Psoas muscle (tissue), 8 donors: ENCODE measurements at regions of chr11 and their contacts with region 1.

Region 1: GRCh38 chr11:110000031-110000502 is 93.1 kb upstream of the ZC3H12C start:
- DNase-seq: no peak
- ATAC-seq: peak; percentile 98 to 99 (median 98)
- H3K4me3 ChIP-seq: no peak overlapping the region
- H3K27ac ChIP-seq: peak overlapping the region; percentile 77
- H3K4me1 ChIP-seq: peaks cover 20% of the 10 kb centered on the region
- H3K27me3 ChIP-seq: no peaks in the 10 kb centered on the region
- CTCF ChIP-seq: no peak

Region 2: GRCh38 chr11:110069158-110069737 is 69.2 kb after region 1 on chr11:
- intact Hi-C with region 1: loop called in 1 of 2 experiments (anchors 5 kb)
- DNase-seq: peak; percentile 64 to 86
- ATAC-seq: peak; percentile 89 to 96 (median 93)
- H3K4me3 ChIP-seq: no peak overlapping the region
- H3K27ac ChIP-seq: peak overlapping the region; percentile 80
- H3K4me1 ChIP-seq: peaks cover 19% of the 10 kb centered on the region
- H3K27me3 ChIP-seq: no peaks in the 10 kb centered on the region
- CTCF ChIP-seq: no peak

Region 3: DNA sequence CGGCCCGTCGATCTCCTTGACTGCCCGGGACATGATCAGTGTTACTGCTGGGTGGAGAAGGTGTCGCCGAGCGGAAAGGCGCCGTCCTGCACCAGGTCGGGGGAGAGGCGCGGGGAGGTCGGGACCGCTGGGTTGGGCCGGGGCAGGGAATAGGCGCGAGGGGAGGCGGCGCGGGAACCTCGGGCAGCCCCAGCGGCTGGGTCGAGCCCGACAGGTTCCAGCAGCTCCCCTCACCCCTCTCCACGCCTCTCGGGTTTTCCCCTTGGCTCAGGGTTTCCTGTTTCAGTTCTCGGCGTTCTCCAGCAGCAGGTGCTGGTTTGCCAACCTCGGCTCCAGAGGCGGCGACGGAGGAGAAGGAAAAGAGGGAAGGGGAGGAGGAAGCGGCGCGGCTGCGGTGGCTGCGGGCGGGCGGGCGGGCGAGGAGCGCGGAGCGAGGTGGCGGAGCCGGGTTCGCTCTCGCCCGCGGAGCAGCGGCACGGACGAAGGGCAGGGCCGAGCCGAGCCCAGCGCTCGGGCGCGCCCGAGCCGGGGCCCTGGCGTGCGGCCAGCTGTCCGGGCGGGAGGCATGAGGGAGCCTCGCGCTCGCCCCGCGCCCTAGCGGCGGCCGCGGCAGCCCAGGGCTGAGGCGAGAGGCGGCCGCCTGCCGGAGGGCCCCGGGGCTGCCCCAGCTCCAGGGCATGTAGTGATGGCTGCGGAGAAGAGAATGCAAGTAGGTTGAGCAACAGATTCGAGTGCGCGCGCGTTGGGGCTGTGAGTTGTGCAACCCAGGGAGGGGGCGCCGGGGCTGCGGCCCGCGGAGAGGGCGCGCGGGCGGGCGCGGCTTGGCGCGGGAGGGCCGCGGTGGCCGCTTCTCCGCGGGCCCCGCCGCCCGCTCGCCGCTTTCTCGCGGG is 92.7 kb after region 1 on chr11 and contains the start of gene ZC3H12C:
- intact Hi-C with region 1: loop called (anchors 2 to 10 kb)
- DNase-seq: peak; percentile 89 to 92
- ATAC-seq: peak; percentile 87 to 90 (median 88)
- H3K4me3 ChIP-seq: peak within 1 kb of the TSS; percentile 82
- H3K27ac ChIP-seq: peak within 1 kb of the TSS; percentile 95
- H3K4me1 ChIP-seq: peaks cover 30% of the 10 kb centered on the region
- H3K27me3 ChIP-seq: no peaks in the 10 kb centered on the region
- CTCF ChIP-seq: peak; percentile 55
- total RNA-seq, gene ZC3H12C: 17.5 to 27.4 (median 20.7) TPM